Naive thymus-derived CD4-positive, alpha-beta T cell (primary cell): ENCODE measurements at regions of chr20 and their contacts with region 1.

Region 1: GRCh38 chr20:35741892-35742740 is at the start of gene RBM39:
- DNase-seq: peak; percentile 92 to 100 (median 99)
- ATAC-seq: peak; percentile 92
- H3K4me3 ChIP-seq: peak within 1 kb of the TSS; percentile 98
- H3K4me3 Mint-ChIP-seq: peak within 1 kb of the TSS; percentile 86 to 100 (median 98)
- H3K27ac ChIP-seq: peak within 1 kb of the TSS; percentile 98
- H3K27ac Mint-ChIP-seq: peak within 1 kb of the TSS; percentile 96 to 100 (median 100)
- H3K4me1 ChIP-seq: peaks cover 34 to 49% of the 10 kb centered on the region in 2 donors
- H3K4me1 Mint-ChIP-seq: peaks cover 22 to 53% (median 45%) of the 10 kb centered on the region in 7 donors
- H3K27me3 ChIP-seq: no peaks in the 10 kb centered on the region
- H3K27me3 Mint-ChIP-seq: no peaks in the 10 kb centered on the region
- total RNA-seq, gene RBM39: 372 to 1,041 (median 699) TPM

Region 2: GRCh38 chr20:34876162-34877001 is 865.7 kb before region 1 on chr20 and contains the start of gene ACSS2:
- CTCF ChIA-PET with region 1: no interaction called
- POLR2A ChIA-PET with region 1: interaction called, 3 read pairs
- intact Hi-C with region 1: loop called (anchors 5 to 10 kb)
- DNase-seq: peak; percentile 88 to 99 (median 92)
- ATAC-seq: peak; percentile 91
- H3K4me3 ChIP-seq: peak within 1 kb of the TSS; percentile 87
- H3K4me3 Mint-ChIP-seq: peak within 1 kb of the TSS; percentile 78 to 99 (median 90)
- H3K27ac ChIP-seq: peak within 1 kb of the TSS; percentile 74
- H3K27ac Mint-ChIP-seq: peak within 1 kb of the TSS; percentile 68 to 96 (median 88)
- H3K4me1 ChIP-seq: peaks cover 35 to 43% of the 10 kb centered on the region in 2 donors
- H3K4me1 Mint-ChIP-seq: peaks cover 47 to 79% (median 72%) of the 10 kb centered on the region in 7 donors
- H3K27me3 ChIP-seq: no peaks in the 10 kb centered on the region
- H3K27me3 Mint-ChIP-seq: no peaks in the 10 kb centered on the region
- total RNA-seq, gene ACSS2: 37.3 to 51.7 (median 43.3) TPM

Region 3: DNA sequence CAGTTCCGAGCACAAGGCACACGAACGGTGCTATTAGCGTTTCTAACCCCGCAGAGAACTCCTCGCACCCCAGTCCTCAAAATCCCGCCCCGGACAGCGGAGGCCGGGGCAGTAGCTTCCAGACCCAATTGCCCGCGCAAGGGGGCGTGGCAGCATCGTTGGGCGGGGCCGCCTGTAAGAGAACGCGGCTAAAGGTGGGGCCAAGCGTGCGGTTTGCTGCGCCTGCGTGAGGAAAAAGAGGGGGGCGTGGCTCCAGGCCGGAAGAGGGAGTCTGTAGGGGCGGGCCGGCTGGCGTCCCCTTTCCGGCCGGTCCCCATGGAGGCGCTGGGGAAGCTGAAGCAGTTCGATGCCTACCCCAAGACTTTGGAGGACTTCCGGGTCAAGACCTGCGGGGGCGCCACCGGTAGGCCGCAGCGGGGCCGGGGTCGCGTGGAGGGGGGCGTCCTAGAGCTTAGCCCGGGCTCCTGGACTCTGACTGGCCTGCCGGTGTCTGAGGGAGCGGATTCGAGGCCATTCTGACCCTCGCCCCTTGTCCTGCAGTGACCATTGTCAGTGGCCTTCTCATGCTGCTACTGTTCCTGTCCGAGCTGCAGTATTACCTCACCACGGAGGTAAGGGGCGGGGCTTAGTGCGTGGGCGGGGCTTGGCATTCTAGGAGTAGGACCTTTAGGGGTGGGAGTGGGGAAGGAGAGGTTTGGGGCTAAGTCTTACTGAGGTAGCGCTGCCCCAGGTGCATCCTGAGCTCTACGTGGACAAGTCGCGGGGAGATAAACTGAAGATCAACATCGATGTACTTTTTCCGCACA is 200.1 kb before region 1 on chr20 and contains the start of gene ERGIC3:
- CTCF ChIA-PET with region 1: no interaction called
- POLR2A ChIA-PET with region 1: interaction called, 9 read pairs
- intact Hi-C with region 1: loop called in 1 of 2 experiments (anchors 1 kb)
- DNase-seq: peak; percentile 94 to 98 (median 95)
- ATAC-seq: peak; percentile 100
- H3K4me3 ChIP-seq: peak within 1 kb of the TSS; percentile 82
- H3K4me3 Mint-ChIP-seq: peak within 1 kb of the TSS; percentile 88 to 92 (median 91)
- H3K27ac ChIP-seq: peak within 1 kb of the TSS; percentile 77
- H3K27ac Mint-ChIP-seq: peak within 1 kb of the TSS; percentile 82 to 96 (median 91)
- H3K4me1 ChIP-seq: peaks cover 11 to 12% of the 10 kb centered on the region in 2 donors
- H3K4me1 Mint-ChIP-seq: peaks cover 9 to 32% (median 23%) of the 10 kb centered on the region in 7 donors
- H3K27me3 ChIP-seq: no peaks in the 10 kb centered on the region
- H3K27me3 Mint-ChIP-seq: no peaks in the 10 kb centered on the region
- total RNA-seq, gene ERGIC3: 139 to 158 (median 148) TPM

Region 4: GRCh38 chr20:35664544-35665221 is 77.4 kb before region 1 on chr20 and contains the starts of genes CPNE1 and RBM12:
- CTCF ChIA-PET with region 1: no interaction called
- POLR2A ChIA-PET with region 1: interaction called, 55 read pairs
- intact Hi-C with region 1: loop called (anchors 1 kb)
- DNase-seq: peak; percentile 89 to 96 (median 96)
- ATAC-seq: peak; percentile 89
- H3K4me3 ChIP-seq: peak within 1 kb of the TSS; percentile 88
- H3K4me3 Mint-ChIP-seq: peak within 1 kb of the TSS; percentile 89 to 98 (median 96)
- H3K27ac ChIP-seq: peak within 1 kb of the TSS; percentile 100
- H3K27ac Mint-ChIP-seq: peak within 1 kb of the TSS; percentile 98 to 100 (median 99)
- H3K4me1 ChIP-seq: peaks cover 35 to 38% of the 10 kb centered on the region in 2 donors
- H3K4me1 Mint-ChIP-seq: peaks cover 32 to 49% (median 47%) of the 10 kb centered on the region in 7 donors
- H3K27me3 ChIP-seq: no peaks in the 10 kb centered on the region
- H3K27me3 Mint-ChIP-seq: no peaks in the 10 kb centered on the region
- total RNA-seq, gene CPNE1: 250 to 378 (median 305) TPM
- total RNA-seq, gene RBM12: 98.2 to 122 (median 114) TPM

Region 5: DNA sequence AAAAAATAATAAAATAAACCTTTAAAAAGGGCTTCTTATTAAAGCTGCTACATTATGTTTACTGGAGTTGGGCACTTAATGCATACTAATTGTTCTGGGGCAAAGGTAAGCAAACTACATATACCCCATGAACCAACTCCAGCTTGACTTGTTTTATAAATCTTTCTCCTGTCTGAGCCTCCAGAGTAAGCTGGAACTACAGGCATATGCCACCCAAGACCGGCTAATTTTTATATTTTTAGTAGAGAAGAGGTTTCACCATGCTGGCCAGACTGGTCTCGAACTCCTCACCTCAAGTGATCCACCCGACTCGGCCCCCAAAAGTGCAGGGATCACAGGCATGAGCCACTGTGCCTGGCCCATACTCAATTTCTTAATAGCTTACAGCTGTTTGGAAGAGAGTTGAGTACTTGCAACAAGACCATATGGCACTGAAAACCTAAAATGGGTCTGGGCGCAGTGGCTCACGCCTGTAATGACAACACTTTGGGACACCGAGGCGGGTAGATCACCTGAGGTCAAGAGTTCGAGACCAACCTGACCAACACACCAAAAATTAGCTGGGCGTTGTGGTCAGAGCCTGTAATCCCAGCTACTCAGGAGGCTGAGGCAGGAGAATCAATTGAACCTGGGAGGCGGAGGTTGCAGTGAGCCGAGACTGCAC is 23.0 kb before region 1 on chr20:
- CTCF ChIA-PET with region 1: interaction called, 5 read pairs
- POLR2A ChIA-PET with region 1: interaction called, 11 read pairs
- intact Hi-C with region 1: no loop called
- DNase-seq: no peak
- ATAC-seq: no peak
- H3K4me3 ChIP-seq: no peak overlapping the region
- H3K4me3 Mint-ChIP-seq: no peak overlapping the region
- H3K27ac ChIP-seq: no peak overlapping the region
- H3K27ac Mint-ChIP-seq: peak overlapping the region in 1 of 9 donors; percentile 59
- H3K4me1 ChIP-seq: peaks cover 8 to 14% of the 10 kb centered on the region in 2 donors
- H3K4me1 Mint-ChIP-seq: peaks cover 23 to 69% (median 45%) of the 10 kb centered on the region in 7 donors
- H3K27me3 ChIP-seq: no peaks in the 10 kb centered on the region
- H3K27me3 Mint-ChIP-seq: no peaks in the 10 kb centered on the region

Region 6: GRCh38 chr20:35771689-35772562 is 29.8 kb after region 1 on chr20 and contains the start of gene PHF20:
- CTCF ChIA-PET with region 1: interaction called, 58 read pairs
- POLR2A ChIA-PET with region 1: interaction called, 733 read pairs
- intact Hi-C with region 1: loop called (anchors 1 kb)
- DNase-seq: peak; percentile 98 to 100 (median 99)
- ATAC-seq: peak; percentile 90
- H3K4me3 ChIP-seq: peak within 1 kb of the TSS; percentile 59
- H3K4me3 Mint-ChIP-seq: peak within 1 kb of the TSS; percentile 84 to 97 (median 94)
- H3K27ac ChIP-seq: peak within 1 kb of the TSS; percentile 98
- H3K27ac Mint-ChIP-seq: peak within 1 kb of the TSS; percentile 96 to 100 (median 100)
- H3K4me1 ChIP-seq: peaks cover 76 to 78% of the 10 kb centered on the region in 2 donors
- H3K4me1 Mint-ChIP-seq: peaks cover 52 to 88% (median 74%) of the 10 kb centered on the region in 7 donors
- H3K27me3 ChIP-seq: no peaks in the 10 kb centered on the region
- H3K27me3 Mint-ChIP-seq: no peaks in the 10 kb centered on the region
- total RNA-seq, gene PHF20: 57.5 to 157 (median 78.0) TPM

Region 7: GRCh38 chr20:35883778-35884540 is 141.8 kb after region 1 on chr20:
- CTCF ChIA-PET with region 1: interaction called, 3 read pairs
- POLR2A ChIA-PET with region 1: interaction called, 7 read pairs
- intact Hi-C with region 1: loop called (anchors 1 to 10 kb)
- DNase-seq: peak; percentile 26 to 69 (median 60)
- ATAC-seq: peak; percentile 93
- H3K4me3 ChIP-seq: no peak overlapping the region
- H3K4me3 Mint-ChIP-seq: peak overlapping the region in 1 of 10 donors; percentile 3
- H3K27ac ChIP-seq: no peak overlapping the region
- H3K27ac Mint-ChIP-seq: peak overlapping the region in 8 of 9 donors; percentile 10 to 74 (median 51)
- H3K4me1 ChIP-seq: no peaks in the 10 kb centered on the region
- H3K4me1 Mint-ChIP-seq: peaks cover 10 to 22% (median 16%) of the 10 kb centered on the region in 7 donors
- H3K27me3 ChIP-seq: no peaks in the 10 kb centered on the region
- H3K27me3 Mint-ChIP-seq: no peaks in the 10 kb centered on the region